ENCODE measurements at regions of chr12 and their contacts with region 1.

Region 1: DNA sequence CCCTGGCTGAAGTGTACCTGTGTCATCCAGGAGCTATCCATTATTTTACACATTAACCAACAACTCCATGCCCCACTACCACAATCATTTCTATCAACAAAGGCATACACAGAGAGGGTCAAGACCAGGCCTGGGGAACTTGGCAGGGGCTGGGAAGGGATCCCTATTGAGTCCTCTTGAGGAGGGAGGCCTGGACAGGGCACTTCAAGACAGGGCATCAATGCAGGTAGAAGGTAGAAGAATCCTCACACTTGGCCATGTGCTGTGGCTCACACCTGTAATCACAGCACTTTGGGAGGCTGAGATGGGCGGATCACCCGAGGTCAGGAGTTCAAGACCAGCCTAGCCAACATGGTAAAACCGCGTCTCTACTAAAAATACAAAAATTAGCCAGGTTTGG is 13.4 kb upstream of the ANKRD33 start:
- DNase-seq: peak in 1 of 5 donors; percentile 1
- H3K4me3 ChIP-seq: no peak overlapping the region
- H3K4me3 Mint-ChIP-seq: no peak overlapping the region
- H3K27ac ChIP-seq: no peak overlapping the region
- H3K27ac Mint-ChIP-seq: no peak overlapping the region
- H3K4me1 ChIP-seq: no peaks in the 10 kb centered on the region
- H3K4me1 Mint-ChIP-seq: peaks cover 0 to 4% (median 0%) of the 10 kb centered on the region in 3 donors
- H3K27me3 ChIP-seq: peaks cover 13% of the 10 kb centered on the region
- H3K27me3 Mint-ChIP-seq: peaks cover 12 to 34% of the 10 kb centered on the region in 2 donors

Region 2: GRCh38 chr12:51886021-51886322 is 11.5 kb after region 1 on chr12:
- CTCF ChIA-PET with region 1: interaction called, 10 read pairs
- POLR2A ChIA-PET with region 1: no interaction called
- DNase-seq: peak in 2 of 5 donors; percentile 28 to 54
- H3K4me3 ChIP-seq: peak overlapping the region; percentile 25
- H3K4me3 Mint-ChIP-seq: peak overlapping the region in 4 of 7 donors; percentile 0 to 64 (median 42)
- H3K27ac ChIP-seq: no peak overlapping the region
- H3K27ac Mint-ChIP-seq: peak overlapping the region in 7 of 8 donors; percentile 0 to 88 (median 62)
- H3K4me1 ChIP-seq: peaks cover 15% of the 10 kb centered on the region
- H3K4me1 Mint-ChIP-seq: peaks cover 7 to 15% (median 9%) of the 10 kb centered on the region in 3 donors
- H3K27me3 ChIP-seq: no peaks in the 10 kb centered on the region
- H3K27me3 Mint-ChIP-seq: peaks cover 3 to 6% of the 10 kb centered on the region in 2 donors

Measured in CD8-positive, alpha-beta memory T cell (primary cell).